PC-9 (cell line): ENCODE measurements at regions of chr3 and their contacts with region 1.

Region 1: GRCh38 chr3:33915791-33916546 is 117.5 kb downstream of the PDCD6IP start:
- DNase-seq: peak in 1 of 2 experiments; percentile 16
- H3K4me3 ChIP-seq: no peak overlapping the region
- H3K27ac ChIP-seq: no peak overlapping the region
- H3K4me1 ChIP-seq: no peaks in the 10 kb centered on the region
- H3K27me3 ChIP-seq: no peaks in the 10 kb centered on the region
- CTCF ChIP-seq: peak; percentile 21; the same call in 1 of the 2 replicates

Region 2: DNA sequence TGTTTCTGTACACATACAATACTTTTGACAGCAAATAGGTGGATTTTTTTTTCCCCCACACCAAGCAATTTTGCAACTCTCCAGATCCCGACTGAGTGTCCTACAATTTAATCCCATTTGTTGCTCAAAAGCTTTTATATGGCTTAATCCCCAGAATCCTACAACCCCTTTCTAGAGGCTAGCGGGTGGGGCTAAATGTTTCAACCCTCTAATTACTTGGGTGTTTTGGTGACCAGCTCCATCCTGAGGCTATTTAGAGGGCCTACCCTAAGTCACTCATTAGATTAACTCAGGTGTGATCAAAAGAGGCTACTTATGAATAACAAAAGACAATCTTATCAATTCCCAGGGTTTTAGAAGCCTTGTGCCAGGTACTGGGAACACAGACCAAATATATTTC is 659.7 kb before region 1 on chr3:
- CTCF ChIA-PET with region 1: no interaction called
- POLR2A ChIA-PET with region 1: interaction called, 23 read pairs
- intact Hi-C with region 1: no loop called
- DNase-seq: no peak
- H3K4me3 ChIP-seq: no peak overlapping the region
- H3K27ac ChIP-seq: no peak overlapping the region
- H3K4me1 ChIP-seq: no peaks in the 10 kb centered on the region
- H3K27me3 ChIP-seq: no peaks in the 10 kb centered on the region
- CTCF ChIP-seq: no peak

Region 3: GRCh38 chr3:34109846-34110245 is 193.9 kb after region 1 on chr3:
- CTCF ChIA-PET with region 1: no interaction called
- POLR2A ChIA-PET with region 1: no interaction called
- intact Hi-C with region 1: loop called (anchors 10 kb)
- DNase-seq: no peak
- H3K4me3 ChIP-seq: no peak overlapping the region
- H3K27ac ChIP-seq: no peak overlapping the region
- H3K4me1 ChIP-seq: no peaks in the 10 kb centered on the region
- H3K27me3 ChIP-seq: no peaks in the 10 kb centered on the region
- CTCF ChIP-seq: no peak